BJ (cell line): ENCODE measurements at regions of chr16 and their contacts with region 1.

Region 1: GRCh38 chr16:72131036-72131435 is 37.4 kb downstream of the DHX38 start:
- DNase-seq: no peak
- H3K4me3 ChIP-seq: no peak overlapping the region
- H3K27me3 ChIP-seq: no peaks in the 10 kb centered on the region
- CTCF ChIP-seq: no peak

Region 2: GRCh38 chr16:72093448-72094265 is 37.4 kb before region 1 on chr16 and contains the starts of genes DHX38 and TXNL4B:
- CTCF ChIA-PET with region 1: no interaction called
- POLR2A ChIA-PET with region 1: no interaction called
- DNase-seq: peak; percentile 99
- H3K4me3 ChIP-seq: peak within 1 kb of the TSS; percentile 91
- H3K27me3 ChIP-seq: no peaks in the 10 kb centered on the region
- CTCF ChIP-seq: no peak
- polyA plus RNA-seq, gene DHX38: 23.3 and 37.6 TPM in 2 replicates
- polyA plus RNA-seq, gene TXNL4B: 8.3 and 11.5 TPM in 2 replicates

Region 3: GRCh38 chr16:72195609-72196008 is 64.6 kb after region 1 on chr16:
- CTCF ChIA-PET with region 1: no interaction called
- POLR2A ChIA-PET with region 1: interaction called, 10 read pairs
- DNase-seq: no peak
- H3K4me3 ChIP-seq: no peak overlapping the region
- H3K27me3 ChIP-seq: no peaks in the 10 kb centered on the region
- CTCF ChIP-seq: no peak

Region 4: DNA sequence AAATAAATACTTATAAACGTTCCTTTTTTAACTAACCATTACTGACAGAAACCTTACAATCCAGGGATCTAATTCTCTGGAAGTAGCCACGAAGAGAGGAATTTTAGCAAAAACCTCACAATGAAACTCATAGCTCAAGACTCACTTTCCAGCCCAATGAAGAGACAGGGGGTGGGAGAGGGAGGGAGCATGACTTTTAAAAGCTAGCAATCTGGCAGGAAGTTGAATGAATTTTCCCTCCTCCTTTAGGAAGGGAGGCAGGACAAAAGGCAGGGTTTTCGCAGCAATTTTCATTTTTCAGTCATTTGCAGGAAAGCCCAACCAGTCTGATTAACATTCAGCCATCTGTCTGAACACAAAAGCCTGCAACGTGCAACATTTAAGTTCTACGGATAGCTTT is 1784.1 kb after region 1 on chr16:
- CTCF ChIA-PET with region 1: no interaction called
- POLR2A ChIA-PET with region 1: interaction called, 12 read pairs
- DNase-seq: no peak
- H3K4me3 ChIP-seq: no peak overlapping the region
- H3K27me3 ChIP-seq: no peaks in the 10 kb centered on the region
- CTCF ChIP-seq: no peak